ENCODE measurements at regions of chr12 and their contacts with region 1.

Region 1: DNA sequence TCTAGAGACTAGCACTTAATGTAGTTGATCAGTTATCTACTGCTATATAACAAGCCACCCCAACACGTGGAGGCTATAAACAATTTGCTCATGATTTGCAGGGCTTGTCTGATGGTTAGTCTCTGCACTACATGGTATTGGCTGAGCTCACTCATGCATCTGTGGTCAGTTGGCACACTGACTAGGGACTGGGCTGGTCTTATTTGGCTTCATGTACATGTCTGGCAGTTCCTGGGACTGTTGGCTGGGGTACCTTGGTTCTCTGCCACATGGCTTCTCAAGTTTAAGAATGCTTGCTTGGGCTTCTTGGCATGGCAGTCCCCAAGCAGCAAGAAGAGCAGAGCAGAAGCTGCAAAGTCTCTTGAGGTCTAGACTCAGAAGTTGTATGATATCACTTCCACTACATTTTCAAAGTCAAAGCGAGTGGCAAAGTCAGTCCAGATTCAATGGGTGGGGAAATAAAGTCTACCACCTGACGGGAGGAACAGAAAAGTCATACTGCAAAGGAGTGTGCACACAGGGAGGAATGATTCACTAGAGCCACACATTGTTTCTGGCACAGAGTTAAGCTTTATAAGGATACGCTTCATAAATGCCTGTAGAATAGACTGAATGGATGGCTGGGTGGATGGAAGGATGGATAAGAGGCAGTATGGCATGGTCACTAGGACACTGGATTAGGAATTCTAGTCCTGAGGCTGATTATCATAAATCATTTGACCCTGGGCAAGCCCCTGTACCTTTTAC is 44.8 kb upstream of the PTHLH start:
- DNase-seq: no peak
- ATAC-seq: no peak
- H3K4me3 ChIP-seq: no peak overlapping the region
- H3K27ac ChIP-seq: no peak overlapping the region
- H3K4me1 ChIP-seq: no peaks in the 10 kb centered on the region
- H3K27me3 ChIP-seq: no peaks in the 10 kb centered on the region
- CTCF ChIP-seq: no peak
- POLR2A ChIP-seq: no peak
- RAD21 ChIP-seq: no peak

Region 2: GRCh38 chr12:27984275-27984674 is 33.0 kb before region 1 on chr12:
- CTCF ChIA-PET with region 1: no interaction called
- POLR2A ChIA-PET with region 1: no interaction called
- dilution Hi-C with region 1: no loop called
- in situ Hi-C with region 1: no loop called
- intact Hi-C with region 1: loop called (anchors 5 kb)
- DNase-seq: peak; percentile 88
- ATAC-seq: peak; percentile 94
- H3K4me3 ChIP-seq: no peak overlapping the region
- H3K27ac ChIP-seq: no peak overlapping the region
- H3K4me1 ChIP-seq: no peaks in the 10 kb centered on the region; the same call in 1 of the 2 replicates
- H3K27me3 ChIP-seq: no peaks in the 10 kb centered on the region
- CTCF ChIP-seq: no peak
- POLR2A ChIP-seq: no peak
- RAD21 ChIP-seq: no peak

Region 3: DNA sequence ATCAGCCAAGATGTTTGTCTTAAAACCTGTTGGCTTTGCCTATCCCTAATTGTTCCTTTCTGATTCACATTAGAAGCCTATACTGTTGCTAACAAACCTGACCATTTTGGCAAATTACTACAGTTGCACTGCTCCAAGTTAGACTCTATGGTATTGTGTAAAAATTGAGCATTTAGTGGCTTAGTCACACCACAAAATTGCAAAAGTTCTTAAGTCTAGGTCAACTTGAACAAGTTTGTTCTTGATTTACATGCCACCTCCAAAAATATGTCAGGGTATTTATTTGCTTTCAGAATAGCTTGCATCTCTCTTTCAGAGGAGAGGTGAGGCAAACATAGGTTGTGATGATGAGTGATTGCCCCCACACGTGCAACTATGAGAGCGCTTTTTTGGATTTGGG is 17.8 kb before region 1 on chr12:
- CTCF ChIA-PET with region 1: no interaction called
- POLR2A ChIA-PET with region 1: interaction called, 10 read pairs
- dilution Hi-C with region 1: no loop called
- in situ Hi-C with region 1: no loop called
- intact Hi-C with region 1: no loop called
- DNase-seq: peak; percentile 74
- ATAC-seq: peak; percentile 91
- H3K4me3 ChIP-seq: no peak overlapping the region
- H3K27ac ChIP-seq: no peak overlapping the region
- H3K4me1 ChIP-seq: peaks cover 1% of the 10 kb centered on the region; the same call in 1 of the 2 replicates
- H3K27me3 ChIP-seq: no peaks in the 10 kb centered on the region
- CTCF ChIP-seq: no peak
- POLR2A ChIP-seq: no peak
- RAD21 ChIP-seq: no peak

Region 4: GRCh38 chr12:28127455-28127854 is 110.2 kb after region 1 on chr12:
- CTCF ChIA-PET with region 1: no interaction called
- POLR2A ChIA-PET with region 1: no interaction called
- dilution Hi-C with region 1: no loop called
- in situ Hi-C with region 1: no loop called
- intact Hi-C with region 1: no loop called
- DNase-seq: no peak
- ATAC-seq: no peak
- H3K4me3 ChIP-seq: no peak overlapping the region
- H3K27ac ChIP-seq: no peak overlapping the region
- H3K4me1 ChIP-seq: peaks cover 8% of the 10 kb centered on the region
- H3K27me3 ChIP-seq: no peaks in the 10 kb centered on the region
- CTCF ChIP-seq: no peak
- POLR2A ChIP-seq: no peak
- RAD21 ChIP-seq: no peak

Measured in IMR-90 (cell line).